ENCODE measurements at regions of chr3 and their contacts with region 1.

Region 1: DNA sequence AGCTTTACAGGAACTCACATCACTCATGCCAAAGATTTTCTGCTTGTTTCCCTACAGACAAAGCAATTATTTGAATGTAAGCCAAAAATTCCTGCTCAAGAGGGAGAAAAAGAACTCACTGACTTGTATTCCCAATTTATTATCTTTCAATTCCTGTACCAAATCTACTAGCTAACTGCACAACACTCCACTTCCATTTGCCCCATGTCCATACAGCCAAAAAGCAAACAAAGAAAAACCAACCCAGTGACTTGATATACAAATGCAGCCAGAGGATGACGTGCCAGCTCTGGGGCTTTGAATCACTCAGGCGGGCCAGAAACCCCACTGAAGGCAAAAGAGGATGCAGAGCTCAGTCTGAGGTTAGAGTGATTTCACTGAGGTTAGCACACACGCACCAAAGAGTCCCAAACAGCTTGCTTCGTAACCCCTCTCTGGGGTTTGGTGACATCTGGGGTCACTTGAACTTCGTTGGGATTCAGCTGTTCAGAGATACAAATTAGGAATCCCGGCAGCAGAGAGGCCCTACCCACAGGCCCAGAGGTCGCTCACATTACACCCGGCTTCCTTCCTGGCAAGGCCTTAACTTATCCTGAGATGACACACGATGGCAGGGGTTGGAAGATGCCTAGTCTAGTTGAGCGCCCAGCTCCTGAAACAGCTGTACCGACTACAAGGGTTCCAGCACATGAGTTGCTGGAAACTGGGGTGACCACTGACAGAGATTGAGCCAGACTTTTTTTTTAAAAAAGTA is 1.6 kb downstream of the RFTN1 start:
- DNase-seq: peak; percentile 59 to 97 (median 78)
- ATAC-seq: peak; percentile 75
- H3K4me3 ChIP-seq: peak overlapping the region; percentile 86 to 92
- H3K4me3 Mint-ChIP-seq: peak overlapping the region; percentile 96
- H3K27ac ChIP-seq: peak overlapping the region; percentile 78 to 92
- H3K27ac Mint-ChIP-seq: peak overlapping the region; percentile 86
- H3K4me1 ChIP-seq: peaks cover 79% of the 10 kb centered on the region
- H3K4me1 Mint-ChIP-seq: peaks cover 85% of the 10 kb centered on the region
- H3K27me3 ChIP-seq: no peaks in the 10 kb centered on the region
- H3K27me3 Mint-ChIP-seq: no peaks in the 10 kb centered on the region
- CTCF ChIP-seq: no peak

Region 2: GRCh38 chr3:16378920-16379319 is 132.9 kb before region 1 on chr3:
- CTCF ChIA-PET with region 1: interaction called, 5 read pairs
- POLR2A ChIA-PET with region 1: interaction called, 6 read pairs
- intact Hi-C with region 1: loop called in 1 of 2 experiments (anchors 2 kb)
- DNase-seq: peak in 2 of 9 experiments; percentile 42 to 54
- ATAC-seq: peak; percentile 28
- H3K4me3 ChIP-seq: no peak overlapping the region
- H3K4me3 Mint-ChIP-seq: peak overlapping the region; percentile 35
- H3K27ac ChIP-seq: peak overlapping the region in 1 of 2 experiments; percentile 17
- H3K27ac Mint-ChIP-seq: peak overlapping the region; percentile 88
- H3K4me1 ChIP-seq: peaks cover 62% of the 10 kb centered on the region
- H3K4me1 Mint-ChIP-seq: peaks cover 95% of the 10 kb centered on the region
- H3K27me3 ChIP-seq: no peaks in the 10 kb centered on the region
- H3K27me3 Mint-ChIP-seq: no peaks in the 10 kb centered on the region
- CTCF ChIP-seq: no peak

Region 3: GRCh38 chr3:16482770-16483531 is 28.9 kb before region 1 on chr3:
- CTCF ChIA-PET with region 1: interaction called, 13 read pairs
- POLR2A ChIA-PET with region 1: interaction called, 16 read pairs
- intact Hi-C with region 1: loop called in 1 of 2 experiments (anchors 2 kb)
- DNase-seq: peak in 8 of 9 experiments; percentile 6 to 69 (median 46)
- ATAC-seq: peak; percentile 72
- H3K4me3 ChIP-seq: peak overlapping the region in 1 of 2 experiments; percentile 4
- H3K4me3 Mint-ChIP-seq: peak overlapping the region; percentile 71
- H3K27ac ChIP-seq: peak overlapping the region; percentile 24 to 78
- H3K27ac Mint-ChIP-seq: peak overlapping the region; percentile 89
- H3K4me1 ChIP-seq: peaks cover 38% of the 10 kb centered on the region
- H3K4me1 Mint-ChIP-seq: peaks cover 87% of the 10 kb centered on the region
- H3K27me3 ChIP-seq: no peaks in the 10 kb centered on the region
- H3K27me3 Mint-ChIP-seq: no peaks in the 10 kb centered on the region
- CTCF ChIP-seq: no peak

Region 4: GRCh38 chr3:16529264-16529663 is 17.4 kb after region 1 on chr3:
- CTCF ChIA-PET with region 1: interaction called, 15 read pairs
- POLR2A ChIA-PET with region 1: interaction called, 4 read pairs
- intact Hi-C with region 1: loop called in 1 of 2 experiments (anchors 1 kb)
- DNase-seq: peak in 2 of 9 experiments; percentile 40 to 61
- ATAC-seq: peak; percentile 77
- H3K4me3 ChIP-seq: no peak overlapping the region
- H3K4me3 Mint-ChIP-seq: no peak overlapping the region
- H3K27ac ChIP-seq: no peak overlapping the region
- H3K27ac Mint-ChIP-seq: peak overlapping the region; percentile 2
- H3K4me1 ChIP-seq: peaks cover 6% of the 10 kb centered on the region
- H3K4me1 Mint-ChIP-seq: peaks cover 10% of the 10 kb centered on the region
- H3K27me3 ChIP-seq: no peaks in the 10 kb centered on the region
- H3K27me3 Mint-ChIP-seq: no peaks in the 10 kb centered on the region
- CTCF ChIP-seq: peak; percentile 40

Measured in CD8-positive, alpha-beta T cell (primary cell).